ENCODE measurements at regions of chr1 and their contacts with region 1.

Region 1: GRCh38 chr1:156692925-156693847 is 12.2 kb downstream of the CRABP2 start:
- DNase-seq: no peak
- H3K4me3 ChIP-seq: no peak overlapping the region
- H3K27ac ChIP-seq: no peak overlapping the region
- H3K4me1 ChIP-seq: peaks cover 0 to 48% (median 11%) of the 10 kb centered on the region in 4 donors
- H3K27me3 ChIP-seq: peaks cover 3 to 66% of the 10 kb centered on the region in 2 donors
- CTCF ChIP-seq: no peak

Region 2: DNA sequence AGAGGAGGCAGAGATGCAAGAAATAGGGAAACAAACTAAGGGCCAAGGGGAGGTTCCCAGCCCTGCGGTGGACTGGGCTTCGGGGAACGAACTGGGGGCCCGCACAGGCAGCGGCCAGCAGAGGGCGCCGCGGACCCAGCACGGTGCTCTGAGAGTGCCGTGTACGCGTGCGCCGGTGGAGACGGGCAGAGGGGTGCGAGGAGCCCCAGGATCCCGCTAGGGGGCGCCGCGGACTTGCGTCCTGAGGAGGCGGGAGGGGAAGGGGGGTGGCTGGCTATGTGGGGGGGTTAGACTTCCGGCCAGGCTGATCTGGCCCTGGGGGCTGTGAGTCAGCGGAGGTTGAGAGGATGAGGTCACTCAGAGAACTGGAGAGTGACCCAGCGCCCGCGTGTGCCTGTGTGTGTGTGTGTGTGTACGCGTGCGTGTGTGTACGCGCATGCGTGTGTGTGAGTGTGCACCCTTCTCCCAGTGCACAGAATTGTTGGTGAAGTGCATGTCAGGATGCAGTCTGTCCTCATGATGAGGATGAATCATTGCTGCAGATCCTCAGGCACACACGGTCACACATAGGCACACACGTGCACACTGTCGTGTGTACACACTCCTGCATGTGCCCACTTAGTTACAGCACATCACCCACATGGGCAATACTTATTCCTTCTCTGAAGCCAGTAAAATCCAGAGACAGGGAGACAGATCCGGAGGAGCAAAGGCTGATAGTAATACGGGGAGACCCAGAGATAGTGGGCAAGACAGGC is 33.0 kb before region 1 on chr1:
- intact Hi-C with region 1: no loop called
- DNase-seq: peak; percentile 94 to 99
- H3K4me3 ChIP-seq: peak overlapping the region in 1 of 2 donors; percentile 14
- H3K27ac ChIP-seq: peak overlapping the region; percentile 73 to 77
- H3K4me1 ChIP-seq: peaks cover 0 to 84% (median 73%) of the 10 kb centered on the region in 4 donors
- H3K27me3 ChIP-seq: peaks cover 0 to 16% of the 10 kb centered on the region in 2 donors
- CTCF ChIP-seq: peak; percentile 99

Region 3: DNA sequence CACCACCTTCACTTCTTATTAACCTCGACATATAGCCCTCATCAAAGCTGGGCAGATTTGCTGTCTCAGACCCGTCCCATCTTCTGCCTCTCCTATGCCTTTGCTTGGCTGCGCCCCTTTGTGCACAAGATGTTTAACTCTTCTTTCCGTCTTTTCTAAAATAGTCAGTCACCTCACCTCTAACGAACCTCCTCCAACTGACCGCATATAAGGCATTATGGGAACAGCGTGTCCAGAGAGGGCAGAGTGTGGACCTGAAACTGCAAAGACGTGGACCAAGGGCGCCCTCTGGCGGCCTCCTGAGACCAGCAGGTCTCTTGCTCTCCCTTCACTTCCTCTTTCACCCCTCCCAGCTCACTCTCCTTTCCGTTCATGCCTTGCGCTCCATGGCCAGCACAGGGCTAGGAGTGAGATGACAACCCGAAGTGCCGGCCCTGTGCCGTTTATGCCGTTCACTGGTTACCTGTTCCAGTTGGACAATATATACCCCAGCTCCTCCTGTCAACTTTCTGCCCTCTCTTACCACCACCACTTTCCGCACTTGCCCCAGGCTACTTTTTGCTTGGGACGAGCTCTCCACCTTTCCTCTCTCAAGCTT is 32.6 kb after region 1 on chr1:
- intact Hi-C with region 1: loop called (anchors 2 kb)
- DNase-seq: peak; percentile 86 to 93
- H3K4me3 ChIP-seq: peak overlapping the region; percentile 65
- H3K27ac ChIP-seq: peak overlapping the region in 1 of 2 donors; percentile 44
- H3K4me1 ChIP-seq: peaks cover 0 to 48% (median 40%) of the 10 kb centered on the region in 4 donors
- H3K27me3 ChIP-seq: no peaks in the 10 kb centered on the region
- CTCF ChIP-seq: peak; percentile 92 to 97

Measured in tibial artery (tissue), 4 donors.